ENCODE measurements at regions of chr7 and their contacts with region 1.

Region 1: GRCh38 chr7:140175221-140176121 is 1.3 kb downstream of the KDM7A start:
- DNase-seq: peak; percentile 95
- H3K4me3 ChIP-seq: peak overlapping the region; percentile 87 to 93
- H3K27ac ChIP-seq: peak overlapping the region; percentile 98
- H3K4me1 ChIP-seq: peaks cover 4% of the 10 kb centered on the region
- H3K27me3 ChIP-seq: no peaks in the 10 kb centered on the region
- CTCF ChIP-seq: peak; percentile 74 to 91 (median 85)
- POLR2A ChIP-seq: no peak

Region 2: GRCh38 chr7:139995017-139995931 is 180.2 kb before region 1 on chr7:
- intact Hi-C with region 1: no loop called
- DNase-seq: peak; percentile 55
- H3K4me3 ChIP-seq: no peak overlapping the region
- H3K27ac ChIP-seq: no peak overlapping the region
- H3K4me1 ChIP-seq: no peaks in the 10 kb centered on the region
- H3K27me3 ChIP-seq: no peaks in the 10 kb centered on the region
- CTCF ChIP-seq: no peak
- POLR2A ChIP-seq: no peak

Region 3: DNA sequence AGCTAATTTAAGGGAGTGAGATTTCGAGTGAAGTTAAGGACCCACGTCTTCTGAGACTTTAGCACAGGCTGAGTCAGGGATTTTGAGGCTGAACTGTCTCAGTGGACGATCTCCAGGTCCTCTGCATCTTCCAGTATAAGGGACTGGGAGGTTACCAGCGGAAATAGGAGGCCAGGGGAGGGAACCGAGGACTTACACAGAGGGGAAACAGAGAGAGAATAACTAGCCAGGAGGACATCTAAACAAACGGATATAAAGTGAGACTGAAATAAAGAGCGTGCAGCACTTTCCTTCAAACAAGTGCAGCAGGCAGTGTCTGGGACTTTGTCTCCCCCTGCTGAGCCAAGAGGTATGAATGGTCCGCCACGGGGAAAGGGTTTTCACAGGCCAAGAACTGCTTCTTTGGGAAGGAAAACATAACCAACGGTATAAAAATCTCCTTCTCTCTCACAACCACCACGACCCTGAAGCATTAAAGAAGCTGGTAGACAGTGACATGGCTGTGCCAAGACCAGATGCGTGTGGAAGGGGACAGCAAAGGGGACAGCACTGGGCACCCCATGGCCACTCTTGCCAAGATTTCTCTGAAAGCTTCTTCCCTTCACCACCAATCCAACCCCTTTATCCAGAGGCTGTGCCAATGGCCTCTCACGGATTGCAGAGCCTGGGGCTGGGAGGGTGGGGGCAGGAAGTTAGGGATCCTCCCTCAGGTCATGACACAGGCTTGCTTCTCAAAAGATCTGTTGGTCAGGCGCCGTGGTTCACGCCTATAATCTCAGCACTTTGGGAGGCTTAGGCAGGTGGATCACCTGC is 150.9 kb after region 1 on chr7:
- intact Hi-C with region 1: loop called (anchors 10 kb)
- DNase-seq: peak; percentile 84
- H3K4me3 ChIP-seq: no peak overlapping the region
- H3K27ac ChIP-seq: peak overlapping the region in 1 of 2 donors; percentile 64
- H3K4me1 ChIP-seq: peaks cover 10% of the 10 kb centered on the region
- H3K27me3 ChIP-seq: no peaks in the 10 kb centered on the region
- CTCF ChIP-seq: peak; percentile 26 to 54 (median 51)
- POLR2A ChIP-seq: no peak